RWPE1 (cell line): ENCODE measurements at regions of chr6 and their contacts with region 1.

Region 1: GRCh38 chr6:30453508-30454116 is 35.7 kb upstream of the HLA-E start:
- DNase-seq: peak; percentile 88
- H3K27ac ChIP-seq: no peak overlapping the region
- CTCF ChIP-seq: peak; percentile 83

Region 2: GRCh38 chr6:30465595-30466306 is 12.1 kb after region 1 on chr6:
- CTCF ChIA-PET with region 1: interaction called, 15 read pairs
- POLR2A ChIA-PET with region 1: no interaction called
- DNase-seq: no peak
- H3K27ac ChIP-seq: no peak overlapping the region
- CTCF ChIP-seq: no peak

Region 3: GRCh38 chr6:30493643-30494250 is 40.1 kb after region 1 on chr6:
- CTCF ChIA-PET with region 1: no interaction called
- POLR2A ChIA-PET with region 1: no interaction called
- DNase-seq: no peak
- H3K27ac ChIP-seq: peak overlapping the region; percentile 33; the same call in 1 of the 2 replicates
- CTCF ChIP-seq: no peak

Region 4: GRCh38 chr6:30564114-30564513 is 110.5 kb after region 1 on chr6:
- CTCF ChIA-PET with region 1: no interaction called
- POLR2A ChIA-PET with region 1: no interaction called
- DNase-seq: no peak
- H3K27ac ChIP-seq: no peak overlapping the region
- CTCF ChIP-seq: no peak